ENCODE measurements at regions of chr9 and their contacts with region 1.

Region 1: GRCh38 chr9:127916665-127917613 is at the start of gene ST6GALNAC4:
- DNase-seq: peak; percentile 70
- ATAC-seq: peak; percentile 70
- H3K4me3 ChIP-seq: peak within 1 kb of the TSS; percentile 71 to 91 (median 73)
- H3K27ac ChIP-seq: peak within 1 kb of the TSS; percentile 40
- H3K4me1 ChIP-seq: peaks cover 78% of the 10 kb centered on the region
- H3K27me3 ChIP-seq: no peaks in the 10 kb centered on the region
- CTCF ChIP-seq: no peak
- EP300 ChIP-seq: no peak
- POLR2A ChIP-seq: no peak
- RAD21 ChIP-seq: no peak
- total RNA-seq, gene ST6GALNAC4: 14.8 and 18.8 TPM in 2 replicates

Region 2: GRCh38 chr9:127503947-127504782 is 412.8 kb before region 1 on chr9:
- CTCF ChIA-PET with region 1: no interaction called
- POLR2A ChIA-PET with region 1: no interaction called
- in situ Hi-C with region 1: loop called (anchors 10 kb)
- intact Hi-C with region 1: no loop called
- DNase-seq: peak; percentile 70
- ATAC-seq: peak; percentile 84
- H3K4me3 ChIP-seq: no peak overlapping the region
- H3K27ac ChIP-seq: no peak overlapping the region
- H3K4me1 ChIP-seq: no peaks in the 10 kb centered on the region
- H3K27me3 ChIP-seq: no peaks in the 10 kb centered on the region
- CTCF ChIP-seq: peak; percentile 97
- EP300 ChIP-seq: no peak
- POLR2A ChIP-seq: no peak
- RAD21 ChIP-seq: peak; percentile 95

Region 3: GRCh38 chr9:127734747-127735529 is 182.0 kb before region 1 on chr9 and contains the start of gene TOR2A:
- CTCF ChIA-PET with region 1: interaction called, 3 read pairs
- POLR2A ChIA-PET with region 1: no interaction called
- in situ Hi-C with region 1: no loop called
- intact Hi-C with region 1: loop called (anchors 1 kb)
- DNase-seq: peak; percentile 93
- ATAC-seq: peak; percentile 91
- H3K4me3 ChIP-seq: peak within 1 kb of the TSS; percentile 57 to 77 (median 74)
- H3K27ac ChIP-seq: peak within 1 kb of the TSS; percentile 71
- H3K4me1 ChIP-seq: peaks cover 29% of the 10 kb centered on the region
- H3K27me3 ChIP-seq: peaks cover 4 to 19% of the 10 kb centered on the region in 2 experiments; a peak in 4 of 5 replicates
- CTCF ChIP-seq: peak; percentile 99
- EP300 ChIP-seq: peak; percentile 13 to 29; a peak in 1 of 4 replicates
- POLR2A ChIP-seq: peak; percentile 51 to 70
- RAD21 ChIP-seq: peak; percentile 90
- total RNA-seq, gene TOR2A: 5.5 and 7.2 TPM in 2 replicates

Region 4: GRCh38 chr9:127869310-127870152 is 47.4 kb before region 1 on chr9:
- CTCF ChIA-PET with region 1: interaction called, 10 read pairs
- POLR2A ChIA-PET with region 1: interaction called, 4 read pairs
- in situ Hi-C with region 1: loop called (anchors 5 kb)
- intact Hi-C with region 1: loop called (anchors 1 kb)
- DNase-seq: peak; percentile 71
- ATAC-seq: peak; percentile 94
- H3K4me3 ChIP-seq: no peak overlapping the region
- H3K27ac ChIP-seq: no peak overlapping the region
- H3K4me1 ChIP-seq: peaks cover 17% of the 10 kb centered on the region
- H3K27me3 ChIP-seq: no peaks in the 10 kb centered on the region
- CTCF ChIP-seq: peak; percentile 96
- EP300 ChIP-seq: no peak
- POLR2A ChIP-seq: no peak
- RAD21 ChIP-seq: peak; percentile 96

Region 5: DNA sequence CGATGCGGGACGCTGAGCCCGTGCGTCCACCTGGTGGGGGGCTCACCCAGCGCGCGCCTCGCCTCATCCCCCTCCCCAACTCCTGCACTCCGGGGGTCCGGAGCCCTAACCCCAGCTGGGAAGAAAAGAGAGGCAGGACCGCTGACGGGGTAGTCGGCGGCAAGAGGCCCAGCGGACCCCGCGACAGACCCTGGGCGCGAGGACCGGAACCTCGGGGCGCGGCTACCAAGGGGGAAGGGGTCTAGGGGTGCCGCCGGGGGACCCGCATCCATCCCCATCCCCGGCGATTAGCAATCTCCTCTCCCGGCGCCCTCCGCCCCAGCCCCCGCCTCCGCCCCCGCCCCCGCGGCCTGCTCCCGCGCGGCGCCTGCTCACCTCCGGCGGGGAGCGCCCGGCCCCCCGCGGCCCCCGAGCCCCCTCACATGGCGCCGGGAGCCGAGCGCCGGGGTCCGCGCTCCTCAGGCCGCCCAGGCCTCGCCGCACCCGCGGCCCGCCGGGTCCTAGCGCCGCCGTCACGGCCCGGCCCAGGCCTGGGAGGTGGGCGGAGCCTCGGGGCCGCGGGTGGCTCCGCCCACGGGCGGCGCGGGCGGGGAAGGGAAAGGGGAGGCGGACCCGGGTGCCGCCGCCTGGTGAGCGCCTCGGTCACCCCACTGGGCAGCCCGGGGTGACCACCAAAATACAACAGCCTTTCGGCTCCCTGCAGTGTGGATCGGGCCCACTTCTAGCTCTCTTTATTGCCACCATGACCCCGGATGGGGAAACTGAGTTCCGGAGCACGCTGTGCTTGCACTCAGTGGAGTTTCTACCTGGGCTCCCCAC is 17.6 kb before region 1 on chr9 and contains the start of gene ST6GALNAC6:
- CTCF ChIA-PET with region 1: no interaction called
- POLR2A ChIA-PET with region 1: interaction called, 78 read pairs
- in situ Hi-C with region 1: no loop called
- intact Hi-C with region 1: loop called (anchors 2 kb)
- DNase-seq: no peak
- ATAC-seq: peak; percentile 14
- H3K4me3 ChIP-seq: peak within 1 kb of the TSS; percentile 89 to 95 (median 95)
- H3K27ac ChIP-seq: peak within 1 kb of the TSS; percentile 91
- H3K4me1 ChIP-seq: peaks cover 64% of the 10 kb centered on the region
- H3K27me3 ChIP-seq: no peaks in the 10 kb centered on the region
- CTCF ChIP-seq: no peak
- EP300 ChIP-seq: no peak
- POLR2A ChIP-seq: no peak
- RAD21 ChIP-seq: no peak
- total RNA-seq, gene ST6GALNAC6: 16.7 and 18.5 TPM in 2 replicates

Region 6: GRCh38 chr9:128007566-128008138 is 90.7 kb after region 1 on chr9:
- CTCF ChIA-PET with region 1: no interaction called
- POLR2A ChIA-PET with region 1: no interaction called
- in situ Hi-C with region 1: no loop called
- intact Hi-C with region 1: no loop called
- DNase-seq: peak; percentile 45
- ATAC-seq: no peak
- H3K4me3 ChIP-seq: peak overlapping the region in 2 of 3 experiments; percentile 9 to 44; a peak in 1 of 6 replicates
- H3K27ac ChIP-seq: no peak overlapping the region
- H3K4me1 ChIP-seq: peaks cover 69% of the 10 kb centered on the region
- H3K27me3 ChIP-seq: peaks cover 0 to 4% of the 10 kb centered on the region in 2 experiments; a peak in 2 of 5 replicates
- CTCF ChIP-seq: no peak
- EP300 ChIP-seq: no peak
- POLR2A ChIP-seq: no peak
- RAD21 ChIP-seq: no peak

Measured in HepG2 (cell line).